ENCODE measurements at regions of chr4 and their contacts with region 1.

Region 1: GRCh38 chr4:153344131-153345010 is at the start of gene MND1:
- DNase-seq: peak; percentile 64 to 71 (median 64)
- H3K4me3 ChIP-seq: peak within 1 kb of the TSS; percentile 64 to 91 (median 81)
- H3K4me3 Mint-ChIP-seq: peak within 1 kb of the TSS; percentile 88 to 95
- H3K27ac ChIP-seq: no peak within 1 kb of the TSS
- H3K27ac Mint-ChIP-seq: peak within 1 kb of the TSS in 3 of 7 donors; percentile 3 to 25 (median 18)
- H3K4me1 ChIP-seq: peaks cover 20 to 32% of the 10 kb centered on the region in 2 donors
- H3K4me1 Mint-ChIP-seq: peaks cover 43% of the 10 kb centered on the region
- H3K27me3 ChIP-seq: peaks cover 0 to 5% of the 10 kb centered on the region in 2 donors
- H3K27me3 Mint-ChIP-seq: peaks cover 8 to 13% (median 9%) of the 10 kb centered on the region in 3 donors
- CTCF ChIP-seq: peak; percentile 99
- polyA plus RNA-seq, gene MND1: not detected

Region 2: DNA sequence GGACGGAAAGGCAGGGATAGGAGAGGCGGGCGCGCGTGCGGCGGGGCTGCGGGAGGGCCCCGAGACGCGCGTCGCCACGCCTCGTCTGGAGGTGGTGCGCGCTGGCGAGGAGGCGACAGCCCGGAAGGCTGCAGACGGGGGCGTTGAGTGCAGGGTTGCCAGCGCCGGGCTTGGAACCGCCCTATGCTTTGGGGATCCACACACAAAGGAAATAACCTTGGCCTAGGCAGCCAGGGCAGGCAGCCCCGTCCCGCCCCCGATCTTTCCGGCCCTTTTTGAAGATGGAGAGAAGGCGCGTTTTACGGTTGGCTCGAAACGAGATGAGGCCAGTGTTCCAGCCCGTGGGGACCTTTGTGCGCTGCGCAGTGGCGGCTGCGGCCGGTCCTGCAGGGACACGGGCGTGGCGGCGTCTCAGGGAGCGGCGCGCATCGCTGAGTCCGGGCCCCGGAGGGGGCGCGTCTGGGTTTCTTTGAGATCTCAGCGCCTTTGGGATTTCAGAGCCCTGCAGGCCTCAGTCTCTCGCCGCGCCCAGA is 191.0 kb before region 1 on chr4:
- intact Hi-C with region 1: loop called in 1 of 2 experiments (anchors 10 kb)
- DNase-seq: peak; percentile 52 to 58 (median 56)
- H3K4me3 ChIP-seq: peak overlapping the region; percentile 28 to 78 (median 47)
- H3K4me3 Mint-ChIP-seq: peak overlapping the region; percentile 88 to 95
- H3K27ac ChIP-seq: no peak overlapping the region
- H3K27ac Mint-ChIP-seq: peak overlapping the region in 5 of 7 donors; percentile 50 to 85 (median 63)
- H3K4me1 ChIP-seq: peaks cover 32 to 38% of the 10 kb centered on the region in 2 donors
- H3K4me1 Mint-ChIP-seq: peaks cover 37% of the 10 kb centered on the region
- H3K27me3 ChIP-seq: peaks cover 2 to 7% of the 10 kb centered on the region in 2 donors
- H3K27me3 Mint-ChIP-seq: peaks cover 24 to 33% (median 29%) of the 10 kb centered on the region in 3 donors
- CTCF ChIP-seq: peak; percentile 4

Region 3: DNA sequence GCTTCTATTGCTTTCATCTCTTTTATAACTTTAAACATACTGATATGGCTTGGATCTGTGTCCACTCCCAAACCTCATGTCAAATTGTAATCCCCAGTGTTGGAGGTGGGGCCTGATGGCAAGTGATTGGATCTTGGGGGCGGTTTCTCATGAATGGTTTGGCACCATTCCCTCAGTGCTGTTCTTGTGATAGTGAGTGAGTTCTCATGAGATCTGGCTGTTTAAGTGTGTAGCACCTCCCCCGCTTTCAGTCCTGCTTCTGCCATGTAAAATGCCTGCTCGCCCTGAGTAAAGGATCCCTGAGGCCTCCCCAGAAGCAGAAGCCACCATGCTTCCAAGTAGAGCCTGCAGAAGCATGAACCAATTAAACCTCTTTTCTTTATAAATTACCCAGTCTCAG is 17.8 kb after region 1 on chr4:
- intact Hi-C with region 1: no loop called
- DNase-seq: no peak
- H3K4me3 ChIP-seq: no peak overlapping the region
- H3K4me3 Mint-ChIP-seq: no peak overlapping the region
- H3K27ac ChIP-seq: no peak overlapping the region
- H3K27ac Mint-ChIP-seq: no peak overlapping the region
- H3K4me1 ChIP-seq: no peaks in the 10 kb centered on the region
- H3K4me1 Mint-ChIP-seq: peaks cover 5% of the 10 kb centered on the region
- H3K27me3 ChIP-seq: no peaks in the 10 kb centered on the region
- H3K27me3 Mint-ChIP-seq: no peaks in the 10 kb centered on the region
- CTCF ChIP-seq: no peak

Region 4: GRCh38 chr4:153432968-153433753 is 88.8 kb after region 1 on chr4:
- intact Hi-C with region 1: loop called in 1 of 2 experiments (anchors 5 kb)
- DNase-seq: peak; percentile 75 to 88 (median 81)
- H3K4me3 ChIP-seq: peak overlapping the region; percentile 54 to 96 (median 82)
- H3K4me3 Mint-ChIP-seq: peak overlapping the region; percentile 90 to 95
- H3K27ac ChIP-seq: peak overlapping the region; percentile 80 to 85
- H3K27ac Mint-ChIP-seq: peak overlapping the region; percentile 91 to 100 (median 97)
- H3K4me1 ChIP-seq: peaks cover 18 to 24% of the 10 kb centered on the region in 2 donors
- H3K4me1 Mint-ChIP-seq: peaks cover 19% of the 10 kb centered on the region
- H3K27me3 ChIP-seq: no peaks in the 10 kb centered on the region
- H3K27me3 Mint-ChIP-seq: peaks cover 0 to 5% (median 2%) of the 10 kb centered on the region in 3 donors
- CTCF ChIP-seq: peak; percentile 72

Region 5: GRCh38 chr4:153573881-153574802 is 229.8 kb after region 1 on chr4:
- intact Hi-C with region 1: loop called in 1 of 2 experiments (anchors 5 kb)
- DNase-seq: peak in 1 of 3 donors; percentile 15
- H3K4me3 ChIP-seq: no peak overlapping the region
- H3K4me3 Mint-ChIP-seq: no peak overlapping the region
- H3K27ac ChIP-seq: peak overlapping the region in 1 of 2 donors; percentile 13
- H3K27ac Mint-ChIP-seq: peak overlapping the region in 1 of 7 donors; percentile 63
- H3K4me1 ChIP-seq: peaks cover 0 to 12% of the 10 kb centered on the region in 2 donors
- H3K4me1 Mint-ChIP-seq: peaks cover 30% of the 10 kb centered on the region
- H3K27me3 ChIP-seq: no peaks in the 10 kb centered on the region
- H3K27me3 Mint-ChIP-seq: no peaks in the 10 kb centered on the region
- CTCF ChIP-seq: peak; percentile 9

Region 6: DNA sequence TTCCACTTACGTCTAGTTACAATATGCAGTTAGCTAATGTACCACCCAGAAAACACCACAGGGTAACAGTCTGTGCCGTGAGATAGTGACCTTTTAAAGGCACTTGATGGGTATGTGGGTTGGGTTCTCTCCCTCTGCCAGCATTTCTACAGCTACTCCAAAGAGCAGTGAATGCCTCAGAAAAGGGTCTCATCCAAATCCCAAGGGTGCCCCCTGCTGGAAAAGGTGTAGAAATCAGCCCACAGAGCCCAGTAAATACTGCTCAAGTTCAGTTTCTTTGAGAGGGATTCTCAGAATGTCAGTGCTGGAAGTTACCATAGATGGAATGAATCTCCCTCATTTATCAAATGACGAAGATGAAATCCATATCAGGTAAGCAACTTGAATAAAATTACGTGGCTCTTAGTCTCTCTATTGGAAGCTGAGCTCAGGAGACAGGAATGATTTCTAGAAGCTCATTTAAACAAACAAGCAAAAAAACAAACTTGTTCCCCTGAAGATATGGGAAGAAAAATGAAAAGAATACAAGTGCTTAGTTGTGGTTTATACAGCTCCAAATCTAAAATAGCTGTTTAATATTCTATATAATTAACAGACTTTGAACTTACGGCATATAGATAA is 405.9 kb after region 1 on chr4:
- intact Hi-C with region 1: loop called in 1 of 2 experiments (anchors 10 kb)
- DNase-seq: peak; percentile 70 to 80 (median 72)
- H3K4me3 ChIP-seq: no peak overlapping the region
- H3K4me3 Mint-ChIP-seq: peak overlapping the region in 1 of 2 donors; percentile 37
- H3K27ac ChIP-seq: no peak overlapping the region
- H3K27ac Mint-ChIP-seq: peak overlapping the region in 1 of 7 donors; percentile 47
- H3K4me1 ChIP-seq: peaks cover 50% of the 10 kb centered on the region in 2 donors
- H3K4me1 Mint-ChIP-seq: peaks cover 50% of the 10 kb centered on the region
- H3K27me3 ChIP-seq: no peaks in the 10 kb centered on the region
- H3K27me3 Mint-ChIP-seq: peaks cover 0 to 4% (median 0%) of the 10 kb centered on the region in 3 donors
- CTCF ChIP-seq: peak; percentile 82